B cell (primary cell): ENCODE measurements at regions of chr11 and their contacts with region 1.

Region 1: DNA sequence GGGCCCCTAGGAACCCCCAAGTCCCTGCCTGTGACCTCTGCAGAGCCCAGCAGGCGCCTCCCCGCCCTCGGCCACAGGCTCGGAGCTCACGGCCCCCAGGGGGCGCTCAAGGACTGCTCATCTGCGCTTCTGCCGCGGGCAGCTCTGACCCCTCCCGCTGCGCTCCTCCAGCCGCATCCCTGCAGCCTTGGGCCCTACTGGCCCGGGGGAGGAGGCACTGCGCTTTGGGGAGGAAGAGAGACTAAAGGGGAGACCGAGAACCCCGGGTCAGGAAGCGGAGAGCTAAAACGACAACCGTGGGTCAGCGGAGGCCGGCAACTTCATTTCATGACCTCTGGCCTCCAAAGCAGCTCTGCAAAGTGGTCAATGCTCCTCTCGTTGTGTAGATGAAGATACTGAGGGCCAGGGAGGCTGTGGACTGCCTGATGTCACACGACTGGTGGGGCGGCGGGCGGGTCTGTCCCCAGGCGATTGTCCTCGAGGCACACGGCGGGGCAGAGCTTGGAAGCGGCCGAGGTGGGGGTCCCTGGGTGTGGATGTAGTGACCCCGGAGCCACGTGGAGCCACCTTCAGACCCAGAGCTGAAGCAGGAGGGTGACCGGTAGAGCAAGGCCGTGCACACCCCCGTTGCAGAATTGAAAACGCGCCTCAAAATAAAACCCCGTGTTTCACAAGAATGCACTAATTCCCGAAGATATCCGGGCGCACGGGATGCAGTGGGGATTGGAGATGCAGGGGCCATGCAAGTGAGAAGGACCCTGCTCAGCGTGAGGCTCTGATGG is 2.7 kb upstream of the KRTAP5-6 start:
- DNase-seq: peak; percentile 85
- ATAC-seq: peak; percentile 84
- H3K4me3 ChIP-seq: peak overlapping the region in 1 of 5 experiments; percentile 19
- H3K4me3 Mint-ChIP-seq: no peak overlapping the region
- H3K27ac ChIP-seq: no peak overlapping the region
- H3K27ac Mint-ChIP-seq: no peak overlapping the region
- H3K4me1 ChIP-seq: peaks cover 8 to 14% of the 10 kb centered on the region in 2 donors
- H3K4me1 Mint-ChIP-seq: peaks cover 5% of the 10 kb centered on the region
- H3K27me3 ChIP-seq: peaks cover 0 to 43% (median 6%) of the 10 kb centered on the region in 4 experiments
- H3K27me3 Mint-ChIP-seq: peaks cover 44% of the 10 kb centered on the region
- CTCF ChIP-seq: peak; percentile 70

Region 2: GRCh38 chr11:1679881-1680280 is 14.4 kb before region 1 on chr11:
- CTCF ChIA-PET with region 1: interaction called, 17 read pairs
- POLR2A ChIA-PET with region 1: no interaction called
- intact Hi-C with region 1: no loop called
- DNase-seq: no peak
- ATAC-seq: no peak
- H3K4me3 ChIP-seq: no peak overlapping the region
- H3K4me3 Mint-ChIP-seq: no peak overlapping the region
- H3K27ac ChIP-seq: no peak overlapping the region
- H3K27ac Mint-ChIP-seq: no peak overlapping the region
- H3K4me1 ChIP-seq: no peaks in the 10 kb centered on the region
- H3K4me1 Mint-ChIP-seq: no peaks in the 10 kb centered on the region
- H3K27me3 ChIP-seq: peaks cover 0 to 2% (median 0%) of the 10 kb centered on the region in 4 experiments
- H3K27me3 Mint-ChIP-seq: peaks cover 21% of the 10 kb centered on the region
- CTCF ChIP-seq: no peak

Region 3: DNA sequence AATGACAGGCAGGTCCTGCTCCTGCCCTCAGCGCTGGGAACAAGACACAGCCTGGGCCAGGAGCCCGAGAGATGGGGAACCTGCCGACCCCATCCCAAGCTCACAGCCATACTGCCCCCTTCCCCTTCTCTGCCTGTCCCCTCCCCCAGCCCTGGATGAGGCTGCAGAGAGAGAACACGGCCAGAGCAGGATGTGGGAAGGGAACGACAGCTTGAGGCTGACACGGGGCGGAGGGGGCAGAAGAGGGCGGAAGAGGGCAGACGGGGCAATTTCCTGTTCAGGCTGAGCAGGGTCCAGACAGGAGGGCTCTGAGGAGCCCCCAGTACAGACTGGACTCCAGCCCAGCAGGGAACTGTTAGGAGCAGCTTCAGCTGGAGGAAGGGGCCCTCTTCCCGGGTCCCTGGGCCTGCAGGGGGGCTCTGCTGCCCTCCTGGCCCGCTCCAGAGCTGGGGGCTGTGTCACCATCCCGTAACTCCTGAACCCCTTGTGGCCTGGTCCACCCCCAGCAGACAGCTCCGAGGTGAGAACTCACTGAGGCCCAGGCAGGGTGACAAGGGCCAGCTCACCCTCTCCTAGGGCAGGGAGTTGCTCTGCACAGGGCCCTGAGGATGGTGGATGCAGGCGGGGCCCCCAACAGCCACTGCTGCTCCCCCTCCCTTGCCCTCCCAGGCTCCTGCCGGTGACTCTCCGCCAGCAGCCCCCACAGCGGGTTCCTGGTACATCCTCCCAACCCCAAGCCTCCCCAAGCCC is 63.8 kb after region 1 on chr11:
- CTCF ChIA-PET with region 1: interaction called, 11 read pairs
- POLR2A ChIA-PET with region 1: no interaction called
- intact Hi-C with region 1: no loop called
- DNase-seq: no peak
- ATAC-seq: no peak
- H3K4me3 ChIP-seq: no peak overlapping the region
- H3K4me3 Mint-ChIP-seq: no peak overlapping the region
- H3K27ac ChIP-seq: no peak overlapping the region
- H3K27ac Mint-ChIP-seq: no peak overlapping the region
- H3K4me1 ChIP-seq: peaks cover 10 to 37% of the 10 kb centered on the region in 2 donors
- H3K4me1 Mint-ChIP-seq: peaks cover 18% of the 10 kb centered on the region
- H3K27me3 ChIP-seq: no peaks in the 10 kb centered on the region
- H3K27me3 Mint-ChIP-seq: no peaks in the 10 kb centered on the region
- CTCF ChIP-seq: no peak

Region 4: GRCh38 chr11:1997755-1998154 is 303.5 kb after region 1 on chr11 and contains the start of gene H19:
- CTCF ChIA-PET with region 1: interaction called, 202 read pairs
- POLR2A ChIA-PET with region 1: no interaction called
- intact Hi-C with region 1: no loop called
- DNase-seq: no peak
- ATAC-seq: no peak
- H3K4me3 ChIP-seq: no peak within 1 kb of the TSS
- H3K4me3 Mint-ChIP-seq: no peak within 1 kb of the TSS
- H3K27ac ChIP-seq: no peak within 1 kb of the TSS
- H3K27ac Mint-ChIP-seq: no peak within 1 kb of the TSS
- H3K4me1 ChIP-seq: no peaks in the 10 kb centered on the region
- H3K4me1 Mint-ChIP-seq: no peaks in the 10 kb centered on the region
- H3K27me3 ChIP-seq: no peaks in the 10 kb centered on the region
- H3K27me3 Mint-ChIP-seq: no peaks in the 10 kb centered on the region
- CTCF ChIP-seq: no peak
- total RNA-seq, gene H19: not detected in 2 replicates